ENCODE measurements at regions of chrX and their contacts with region 1.

Region 1: DNA sequence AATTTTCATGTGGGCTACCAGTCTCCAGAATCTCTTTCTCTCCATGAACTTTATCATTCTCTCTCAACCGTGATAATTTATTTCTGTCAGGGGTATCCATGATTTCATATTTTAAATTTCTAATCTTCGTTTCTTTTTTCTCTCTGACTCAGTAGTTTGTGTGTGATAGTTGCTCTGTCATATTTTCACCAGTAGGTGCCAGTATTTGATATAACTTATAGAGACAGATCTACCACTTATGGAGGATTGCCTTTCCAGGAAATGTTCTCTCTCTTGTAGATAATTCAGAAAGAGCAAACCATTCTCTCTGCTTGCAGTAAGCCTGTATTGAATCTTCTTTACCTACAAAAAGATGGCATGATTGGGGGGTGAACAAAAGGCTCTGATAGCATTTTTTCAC is 79.3 kb upstream of the DYNLT3 start:
- DNase-seq: no peak
- H3K4me3 Mint-ChIP-seq: no peak overlapping the region
- H3K27ac Mint-ChIP-seq: no peak overlapping the region
- H3K4me1 Mint-ChIP-seq: no peaks in the 10 kb centered on the region
- H3K27me3 Mint-ChIP-seq: peaks cover 4% of the 10 kb centered on the region

Region 2: DNA sequence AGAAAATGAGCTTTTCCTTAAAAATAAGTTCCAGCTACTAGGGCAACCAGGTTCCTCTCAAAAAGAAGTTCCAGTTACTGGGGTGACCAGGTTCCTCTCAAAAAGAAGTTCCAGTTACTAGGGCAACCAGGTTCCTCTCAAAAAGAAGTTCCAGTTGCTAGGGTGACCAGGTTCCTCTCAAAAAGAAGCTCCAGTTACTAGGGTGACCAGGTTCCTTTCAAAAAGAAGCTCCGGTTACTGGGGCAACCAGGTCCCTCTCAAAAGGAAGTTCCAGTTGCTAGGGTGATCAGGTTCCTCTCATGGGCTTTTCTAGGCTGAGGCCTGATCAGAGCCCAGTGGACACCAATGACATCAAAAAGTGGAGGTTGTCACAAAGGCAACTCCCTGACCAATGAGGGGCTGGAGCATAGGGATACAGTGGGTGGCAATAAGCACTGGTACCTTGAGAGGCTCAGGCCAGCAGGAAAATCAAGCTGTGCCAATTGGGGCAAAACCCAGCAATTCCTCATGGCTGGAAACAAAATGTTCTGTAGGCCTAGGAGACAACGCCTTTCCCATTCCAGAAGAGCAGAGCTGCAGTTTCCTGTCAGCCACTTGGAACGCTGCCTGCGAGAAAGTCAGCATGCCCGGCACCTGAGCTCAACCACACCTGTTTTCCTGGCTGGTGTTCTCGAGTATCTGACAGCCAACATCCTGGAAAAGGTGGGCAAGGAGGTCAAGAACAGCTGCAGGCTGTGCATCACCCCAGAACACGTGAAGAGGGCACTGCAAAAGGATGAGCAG is 67.3 kb after region 1 on chrX:
- intact Hi-C with region 1: loop called (anchors 10 kb)
- DNase-seq: no peak
- H3K4me3 Mint-ChIP-seq: no peak overlapping the region
- H3K27ac Mint-ChIP-seq: no peak overlapping the region
- H3K4me1 Mint-ChIP-seq: peaks cover 3% of the 10 kb centered on the region
- H3K27me3 Mint-ChIP-seq: no peaks in the 10 kb centered on the region

Region 3: DNA sequence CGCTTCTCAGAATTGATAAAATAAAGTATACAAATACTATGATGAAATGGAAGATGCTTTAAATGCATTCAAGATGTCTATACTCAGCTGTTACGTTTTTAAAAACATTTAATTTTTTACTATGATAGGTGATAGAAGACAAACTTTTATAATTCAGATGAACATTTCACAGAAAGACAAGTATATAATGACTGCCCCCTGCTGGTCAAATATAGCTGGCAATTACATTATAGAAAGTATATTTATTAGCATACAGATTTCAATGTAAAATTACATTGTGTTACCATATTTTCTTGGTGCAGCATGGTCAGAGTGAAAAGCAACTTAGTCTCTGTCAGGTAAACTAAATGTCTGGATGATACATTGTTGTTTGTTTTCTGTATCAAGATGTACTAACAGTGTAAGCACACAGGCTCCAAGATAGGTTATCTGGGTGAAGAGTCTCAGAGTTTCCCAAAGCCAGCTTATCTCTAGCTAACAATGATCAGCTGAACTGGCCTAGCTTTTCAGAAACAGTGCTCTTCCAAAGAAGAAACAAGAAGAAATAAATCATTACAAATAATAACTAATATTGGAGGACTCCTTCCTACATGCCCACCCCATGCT is 239.9 kb after region 1 on chrX:
- intact Hi-C with region 1: loop called (anchors 1 kb)
- DNase-seq: no peak
- H3K4me3 Mint-ChIP-seq: no peak overlapping the region
- H3K27ac Mint-ChIP-seq: no peak overlapping the region
- H3K4me1 Mint-ChIP-seq: no peaks in the 10 kb centered on the region
- H3K27me3 Mint-ChIP-seq: no peaks in the 10 kb centered on the region

Region 4: DNA sequence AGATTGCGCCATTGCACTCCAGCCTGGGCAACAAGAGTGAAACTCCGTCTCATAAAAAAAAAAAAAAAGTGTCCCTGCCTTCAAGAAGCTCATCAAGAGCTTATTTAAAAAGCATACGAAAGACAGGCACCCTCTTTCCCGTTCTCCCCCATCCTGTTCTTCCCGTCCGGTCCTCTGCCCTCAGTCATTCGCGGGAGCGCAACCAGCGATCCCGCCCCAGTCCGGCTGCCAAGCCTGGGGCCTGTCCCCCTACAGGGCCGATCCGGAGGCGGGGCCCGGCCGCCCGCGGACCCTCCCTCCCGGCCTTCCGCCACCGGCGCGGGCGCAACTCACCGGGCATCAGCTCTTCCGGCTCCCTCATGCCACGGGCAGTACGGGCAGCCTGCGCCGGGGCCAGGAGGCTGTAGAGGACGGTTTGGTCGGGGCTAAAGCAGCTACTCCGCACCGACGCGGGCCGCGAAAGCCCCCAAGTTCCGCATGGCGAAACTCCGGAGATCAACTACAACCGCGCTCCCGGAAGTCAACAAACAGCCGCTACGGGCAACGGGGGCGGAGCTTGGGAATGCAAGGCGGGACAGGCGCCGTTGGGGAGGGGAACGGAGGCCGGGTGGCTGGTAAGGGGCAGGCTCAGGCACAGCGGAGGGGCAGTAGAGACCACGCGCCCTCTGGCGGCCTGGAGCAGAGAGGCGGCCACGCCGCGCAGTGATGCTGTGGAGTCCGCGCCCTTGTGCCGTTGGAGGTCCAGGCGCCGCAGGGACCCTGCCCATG is 400.5 kb after region 1 on chrX and contains the start of gene RPGR:
- intact Hi-C with region 1: loop called (anchors 5 kb)
- DNase-seq: peak; percentile 87
- H3K4me3 Mint-ChIP-seq: peak within 1 kb of the TSS; percentile 89
- H3K27ac Mint-ChIP-seq: peak within 1 kb of the TSS; percentile 91
- H3K4me1 Mint-ChIP-seq: peaks cover 24% of the 10 kb centered on the region
- H3K27me3 Mint-ChIP-seq: no peaks in the 10 kb centered on the region
- total RNA-seq, gene RPGR: 7.3 and 7.7 TPM in 2 replicates

Region 5: DNA sequence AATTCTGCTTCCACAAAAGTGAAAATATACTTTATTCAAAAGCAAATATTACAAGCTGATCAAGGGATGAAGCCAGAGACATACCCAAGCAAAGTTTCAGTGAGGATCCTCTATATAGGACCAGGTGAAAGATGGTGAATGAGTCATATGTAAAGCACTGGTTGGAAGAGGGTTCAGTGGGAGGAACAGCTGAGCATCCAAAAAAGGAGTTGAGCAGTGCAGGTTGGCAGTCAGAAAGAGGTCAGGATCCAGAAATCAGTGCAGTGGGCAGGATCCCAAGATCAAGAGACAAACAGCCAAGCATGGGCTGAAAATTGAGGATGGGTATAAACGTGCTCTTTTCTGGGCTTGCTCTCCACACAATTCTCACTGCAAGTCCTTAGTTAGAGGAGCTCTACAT is 456.0 kb after region 1 on chrX:
- intact Hi-C with region 1: no loop called
- DNase-seq: no peak
- H3K4me3 Mint-ChIP-seq: no peak overlapping the region
- H3K27ac Mint-ChIP-seq: no peak overlapping the region
- H3K4me1 Mint-ChIP-seq: no peaks in the 10 kb centered on the region
- H3K27me3 Mint-ChIP-seq: peaks cover 2% of the 10 kb centered on the region

Measured in activated T-helper 2 cell treated with anti-CD3 and anti-CD28 coated beads, Interferon-gamma antibody, Interleukin-2, Interleukin-4, amounts not matched to agents 10 μg/mL and 5 μg/mL and 100 μg/mL, durations not matched to agents 14 hours and 24 hours and 36 hours (primary cell).